ENCODE measurements at regions of chr6 and their contacts with region 1.

Region 1: GRCh38 chr6:29705389-29706231 is 17.6 kb upstream of the HLA-F start:
- DNase-seq: no peak
- H3K4me3 ChIP-seq: no peak overlapping the region
- H3K27ac ChIP-seq: no peak overlapping the region
- H3K4me1 ChIP-seq: no peaks in the 10 kb centered on the region
- H3K27me3 ChIP-seq: no peaks in the 10 kb centered on the region
- CTCF ChIP-seq: peak in 3 of 4 experiments; percentile 33 to 75 (median 61)
- POLR2A ChIP-seq: no peak

Region 2: DNA sequence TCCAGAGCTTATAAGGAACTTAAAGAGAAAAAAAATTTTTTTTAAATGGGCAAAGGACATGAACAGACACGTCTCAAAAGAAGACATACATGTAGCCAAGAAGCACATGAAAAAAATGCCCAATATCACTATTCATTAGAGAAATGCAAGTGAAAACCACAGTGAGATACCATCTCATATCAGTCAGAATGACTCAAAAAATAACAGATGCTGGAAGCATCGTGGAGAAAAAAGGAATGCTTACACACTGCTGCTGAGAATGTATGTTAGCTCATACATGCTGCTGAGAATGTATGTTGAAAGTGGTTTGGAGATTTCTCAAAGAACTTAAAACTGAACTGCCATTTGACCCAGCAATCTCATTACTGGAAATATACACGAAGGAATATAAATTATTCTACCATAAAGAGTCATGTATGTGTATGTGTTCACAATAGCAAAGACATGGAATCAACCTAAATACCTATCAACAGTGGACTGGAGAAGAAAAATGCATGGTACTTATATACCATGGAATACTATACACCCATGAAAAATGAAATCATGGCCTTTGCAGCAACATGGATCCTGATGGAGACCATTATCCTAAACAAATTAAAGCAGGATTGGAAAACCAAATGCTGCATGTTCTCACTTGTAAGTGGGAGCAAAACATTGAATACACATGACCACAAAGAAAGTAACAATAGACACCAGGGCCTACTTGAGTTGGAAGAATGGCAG is 254.0 kb before region 1 on chr6:
- intact Hi-C with region 1: no loop called
- DNase-seq: no peak
- H3K4me3 ChIP-seq: no peak overlapping the region
- H3K27ac ChIP-seq: no peak overlapping the region
- H3K4me1 ChIP-seq: no peaks in the 10 kb centered on the region
- H3K27me3 ChIP-seq: no peaks in the 10 kb centered on the region
- CTCF ChIP-seq: no peak
- POLR2A ChIP-seq: no peak

Region 3: DNA sequence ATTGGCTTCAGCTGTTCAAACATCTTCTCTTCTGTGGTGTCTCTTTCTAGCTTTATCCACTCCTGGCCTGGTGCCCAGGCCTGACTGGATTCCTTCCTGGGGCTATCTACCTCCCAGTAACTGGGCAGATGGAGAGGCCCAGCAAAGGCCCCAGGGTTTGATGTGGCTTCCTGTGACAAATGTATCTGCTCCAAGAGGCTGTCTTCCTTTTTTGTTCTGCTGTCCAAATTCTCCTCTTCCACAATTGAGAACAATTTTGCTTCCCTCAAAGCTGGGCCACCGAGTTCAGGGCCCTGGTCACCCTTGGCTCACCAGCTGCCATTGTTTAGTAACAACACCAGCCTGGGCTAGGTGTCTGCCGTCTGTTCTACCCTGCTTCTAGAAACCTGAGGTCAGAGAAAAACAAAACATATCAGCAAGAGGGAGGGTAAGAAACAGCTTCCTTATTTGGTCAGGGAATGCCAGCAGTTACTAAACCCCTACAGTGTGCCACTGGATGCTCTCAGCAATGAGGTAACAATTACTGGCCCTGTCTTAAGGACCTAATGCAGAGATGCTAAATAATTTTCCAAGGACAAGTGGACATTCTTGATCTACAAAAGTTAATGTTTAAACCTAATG is 28.5 kb before region 1 on chr6:
- intact Hi-C with region 1: no loop called
- DNase-seq: no peak
- H3K4me3 ChIP-seq: no peak overlapping the region
- H3K27ac ChIP-seq: no peak overlapping the region
- H3K4me1 ChIP-seq: no peaks in the 10 kb centered on the region
- H3K27me3 ChIP-seq: no peaks in the 10 kb centered on the region
- CTCF ChIP-seq: no peak
- POLR2A ChIP-seq: no peak

Region 4: GRCh38 chr6:29752451-29753308 is 47.1 kb after region 1 on chr6:
- intact Hi-C with region 1: loop called (anchors 5 kb)
- DNase-seq: peak; percentile 84
- H3K4me3 ChIP-seq: peak overlapping the region; percentile 54 to 55
- H3K27ac ChIP-seq: peak overlapping the region; percentile 84 to 89
- H3K4me1 ChIP-seq: no peaks in the 10 kb centered on the region
- H3K27me3 ChIP-seq: no peaks in the 10 kb centered on the region
- CTCF ChIP-seq: peak; percentile 81 to 95 (median 90)
- POLR2A ChIP-seq: peak; percentile 52

Region 5: DNA sequence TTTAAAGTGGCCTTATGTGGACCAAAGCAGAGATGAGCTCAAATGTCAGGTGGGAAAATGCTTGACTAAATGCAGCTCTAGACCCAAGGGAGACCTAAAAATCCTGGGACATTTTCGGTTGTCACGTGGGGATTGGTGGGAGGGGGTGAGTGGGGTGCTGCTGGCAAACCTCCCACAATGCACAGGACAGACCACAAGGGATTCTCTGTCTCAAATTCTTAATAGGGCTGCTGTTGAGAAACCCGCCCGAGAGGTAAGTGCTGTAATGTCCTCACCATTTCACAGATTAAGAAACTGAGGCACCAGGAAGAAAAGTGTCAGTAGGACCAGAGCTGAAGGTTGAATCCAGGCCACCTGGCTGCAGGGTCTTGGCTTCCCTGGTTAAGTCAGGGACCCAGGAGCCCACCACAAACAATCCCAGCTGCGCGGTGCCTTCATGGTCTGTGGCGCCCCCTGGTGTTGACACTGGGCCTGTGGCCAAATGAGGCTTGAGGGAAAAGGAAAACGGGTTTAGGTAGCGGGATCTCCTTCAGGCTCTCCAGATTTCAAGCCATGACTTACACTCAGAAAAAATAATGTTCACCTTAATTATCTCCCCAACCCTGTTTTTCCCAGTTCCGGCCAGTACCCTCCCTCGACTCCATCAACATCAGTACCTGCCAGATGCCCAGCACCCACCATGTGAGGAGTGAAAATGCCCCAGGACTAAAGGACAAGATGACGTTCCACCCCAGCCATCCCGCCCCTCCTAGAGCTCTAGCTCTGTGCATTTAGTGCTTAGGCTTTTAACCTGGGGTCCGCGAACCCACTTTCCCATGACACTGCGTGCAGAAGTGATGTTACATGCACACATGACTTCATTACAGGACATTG is 129.2 kb after region 1 on chr6:
- intact Hi-C with region 1: loop called (anchors 2 kb)
- DNase-seq: no peak
- H3K4me3 ChIP-seq: no peak overlapping the region
- H3K27ac ChIP-seq: no peak overlapping the region
- H3K4me1 ChIP-seq: no peaks in the 10 kb centered on the region
- H3K27me3 ChIP-seq: no peaks in the 10 kb centered on the region
- CTCF ChIP-seq: peak; percentile 47 to 87 (median 78)
- POLR2A ChIP-seq: no peak

Region 6: DNA sequence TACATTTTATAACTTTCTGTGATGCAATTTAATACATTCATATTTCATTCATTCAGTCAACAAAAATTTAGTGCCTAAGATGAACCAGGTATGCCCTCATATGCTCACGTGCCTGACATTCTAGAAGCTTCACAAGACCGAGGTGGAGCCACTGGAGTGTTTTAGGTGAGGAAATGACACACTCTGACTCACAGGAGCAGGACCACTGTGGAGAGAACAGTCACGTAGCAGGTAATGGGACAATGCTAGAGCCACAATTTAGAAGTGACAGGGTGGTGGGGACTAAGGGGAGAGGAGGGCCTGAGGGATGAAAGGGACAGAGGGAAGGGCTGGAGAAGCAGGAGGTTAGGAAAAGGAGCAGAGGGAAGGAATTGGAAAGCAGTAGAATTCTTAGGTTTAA is 219.1 kb after region 1 on chr6:
- intact Hi-C with region 1: no loop called
- DNase-seq: no peak
- H3K4me3 ChIP-seq: no peak overlapping the region
- H3K27ac ChIP-seq: no peak overlapping the region
- H3K4me1 ChIP-seq: no peaks in the 10 kb centered on the region
- H3K27me3 ChIP-seq: no peaks in the 10 kb centered on the region
- CTCF ChIP-seq: no peak
- POLR2A ChIP-seq: no peak

Region 7: GRCh38 chr6:29943053-29943966 is 237.7 kb after region 1 on chr6:
- intact Hi-C with region 1: no loop called
- DNase-seq: no peak
- H3K4me3 ChIP-seq: peak overlapping the region; percentile 46 to 53
- H3K27ac ChIP-seq: peak overlapping the region; percentile 86 to 88
- H3K4me1 ChIP-seq: no peaks in the 10 kb centered on the region
- H3K27me3 ChIP-seq: no peaks in the 10 kb centered on the region
- CTCF ChIP-seq: no peak
- POLR2A ChIP-seq: no peak